ENCODE measurements at regions of chr11 and their contacts with region 1.

Region 1: DNA sequence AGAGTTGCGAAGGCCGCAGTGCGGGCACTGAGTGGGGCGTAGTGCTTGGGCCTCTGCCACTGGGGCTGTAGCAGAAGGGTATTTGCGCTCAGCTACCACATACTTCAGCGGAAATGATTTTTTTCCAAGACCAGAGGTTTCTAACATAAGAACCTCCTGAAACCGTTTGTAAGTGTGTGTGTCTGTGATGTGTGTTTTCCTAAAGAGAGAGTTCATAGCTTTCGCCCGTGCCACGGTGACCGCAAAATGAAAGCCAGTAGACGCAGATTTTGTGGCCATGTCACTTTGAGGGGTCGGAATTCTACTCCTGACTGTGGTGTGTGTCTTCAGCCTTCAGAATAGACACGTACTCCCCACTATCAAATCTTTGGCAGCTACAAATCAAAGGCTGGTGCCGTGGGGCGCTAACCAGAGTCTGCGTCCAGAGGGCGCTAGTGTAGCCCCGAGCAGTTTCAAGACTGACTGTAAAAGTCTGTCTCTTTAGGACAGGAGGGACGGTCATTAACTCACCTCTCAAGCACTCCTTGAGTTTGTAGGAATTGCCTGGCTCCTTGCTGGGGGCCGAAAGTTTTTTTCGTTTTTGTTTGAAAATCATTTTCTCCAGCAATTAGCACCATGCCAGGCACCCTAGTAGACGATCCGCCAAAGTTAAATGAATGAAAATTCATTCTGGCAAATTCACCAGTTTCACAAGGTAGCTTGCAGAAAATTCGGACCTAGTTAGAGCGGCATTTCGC is 2.5 kb upstream of the CALCA start:
- DNase-seq: peak; percentile 71
- ATAC-seq: peak; percentile 46
- H3K4me3 ChIP-seq: peak overlapping the region in 4 of 5 experiments; percentile 1 to 54 (median 32)
- H3K4me3 Mint-ChIP-seq: peak overlapping the region; percentile 87
- H3K27ac ChIP-seq: no peak overlapping the region
- H3K27ac Mint-ChIP-seq: no peak overlapping the region
- H3K4me1 ChIP-seq: peaks cover 37 to 41% of the 10 kb centered on the region in 2 donors
- H3K4me1 Mint-ChIP-seq: peaks cover 39% of the 10 kb centered on the region
- H3K27me3 ChIP-seq: peaks cover 0 to 73% (median 48%) of the 10 kb centered on the region in 4 experiments
- H3K27me3 Mint-ChIP-seq: peaks cover 75% of the 10 kb centered on the region
- CTCF ChIP-seq: peak; percentile 69

Region 2: GRCh38 chr11:14927146-14927545 is 47.5 kb before region 1 on chr11:
- CTCF ChIA-PET with region 1: no interaction called
- POLR2A ChIA-PET with region 1: no interaction called
- intact Hi-C with region 1: no loop called
- DNase-seq: no peak
- ATAC-seq: no peak
- H3K4me3 ChIP-seq: no peak overlapping the region
- H3K4me3 Mint-ChIP-seq: no peak overlapping the region
- H3K27ac ChIP-seq: no peak overlapping the region
- H3K27ac Mint-ChIP-seq: no peak overlapping the region
- H3K4me1 ChIP-seq: no peaks in the 10 kb centered on the region
- H3K4me1 Mint-ChIP-seq: no peaks in the 10 kb centered on the region
- H3K27me3 ChIP-seq: peaks cover 0 to 14% (median 8%) of the 10 kb centered on the region in 4 experiments
- H3K27me3 Mint-ChIP-seq: peaks cover 24% of the 10 kb centered on the region
- CTCF ChIP-seq: no peak

Region 3: GRCh38 chr11:15006139-15006759 is 31.6 kb after region 1 on chr11:
- CTCF ChIA-PET with region 1: interaction called, 11 read pairs
- POLR2A ChIA-PET with region 1: no interaction called
- intact Hi-C with region 1: no loop called
- DNase-seq: peak; percentile 55
- ATAC-seq: no peak
- H3K4me3 ChIP-seq: no peak overlapping the region
- H3K4me3 Mint-ChIP-seq: no peak overlapping the region
- H3K27ac ChIP-seq: no peak overlapping the region
- H3K27ac Mint-ChIP-seq: no peak overlapping the region
- H3K4me1 ChIP-seq: no peaks in the 10 kb centered on the region
- H3K4me1 Mint-ChIP-seq: no peaks in the 10 kb centered on the region
- H3K27me3 ChIP-seq: peaks cover 0 to 19% (median 0%) of the 10 kb centered on the region in 4 experiments
- H3K27me3 Mint-ChIP-seq: peaks cover 57% of the 10 kb centered on the region
- CTCF ChIP-seq: peak; percentile 75